Naive thymus-derived CD4-positive, alpha-beta T cell (primary cell): ENCODE measurements at regions of chr9 and their contacts with region 1.

Region 1: DNA sequence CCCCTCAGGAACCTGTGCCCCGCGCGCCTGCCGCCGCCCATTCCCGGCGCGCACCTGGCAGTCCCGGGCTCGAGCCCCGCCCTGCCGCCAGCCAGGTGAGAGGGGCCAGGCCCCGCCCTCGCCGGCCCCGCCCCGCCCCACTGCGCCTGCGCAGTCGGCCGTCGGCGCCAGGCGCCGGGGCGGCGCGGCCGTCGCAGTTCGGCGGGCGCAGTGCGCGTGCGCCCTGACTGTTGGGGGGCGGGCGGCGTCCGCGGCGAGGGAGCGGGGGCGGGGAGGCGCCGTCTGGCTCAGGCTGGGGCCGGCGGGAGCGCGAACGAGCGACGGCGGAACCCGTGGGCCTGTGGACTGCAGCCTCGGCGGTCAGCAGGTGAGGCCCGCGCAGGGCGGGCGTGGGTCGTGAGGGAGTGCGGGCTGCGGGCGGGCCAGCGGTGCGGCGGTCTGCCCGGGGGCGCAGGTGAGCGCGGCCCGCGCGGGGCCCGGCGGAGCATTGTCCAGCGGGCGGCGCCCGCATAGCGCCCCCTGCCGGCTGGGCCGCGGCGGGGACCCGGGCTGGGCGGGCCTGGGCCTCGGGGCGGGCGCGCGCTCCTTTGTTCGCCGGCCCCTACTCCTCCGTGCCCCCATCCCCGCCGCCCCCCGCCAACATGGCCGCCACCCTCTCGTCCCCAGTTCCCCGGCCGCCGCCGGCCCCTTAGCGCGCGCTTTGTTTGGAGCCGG is at the start of gene SPIN1:
- DNase-seq: peak; percentile 66 to 94 (median 87)
- ATAC-seq: peak; percentile 87
- H3K4me3 ChIP-seq: peak within 1 kb of the TSS; percentile 97
- H3K4me3 Mint-ChIP-seq: peak within 1 kb of the TSS; percentile 91 to 98 (median 95)
- H3K27ac ChIP-seq: peak within 1 kb of the TSS; percentile 67
- H3K27ac Mint-ChIP-seq: peak within 1 kb of the TSS; percentile 90 to 97 (median 95)
- H3K4me1 ChIP-seq: peaks cover 8 to 11% of the 10 kb centered on the region in 2 donors
- H3K4me1 Mint-ChIP-seq: peaks cover 23 to 49% (median 43%) of the 10 kb centered on the region in 7 donors
- H3K27me3 ChIP-seq: no peaks in the 10 kb centered on the region
- H3K27me3 Mint-ChIP-seq: no peaks in the 10 kb centered on the region
- total RNA-seq, gene SPIN1: 27.5 to 38.4 (median 34.9) TPM

Region 2: DNA sequence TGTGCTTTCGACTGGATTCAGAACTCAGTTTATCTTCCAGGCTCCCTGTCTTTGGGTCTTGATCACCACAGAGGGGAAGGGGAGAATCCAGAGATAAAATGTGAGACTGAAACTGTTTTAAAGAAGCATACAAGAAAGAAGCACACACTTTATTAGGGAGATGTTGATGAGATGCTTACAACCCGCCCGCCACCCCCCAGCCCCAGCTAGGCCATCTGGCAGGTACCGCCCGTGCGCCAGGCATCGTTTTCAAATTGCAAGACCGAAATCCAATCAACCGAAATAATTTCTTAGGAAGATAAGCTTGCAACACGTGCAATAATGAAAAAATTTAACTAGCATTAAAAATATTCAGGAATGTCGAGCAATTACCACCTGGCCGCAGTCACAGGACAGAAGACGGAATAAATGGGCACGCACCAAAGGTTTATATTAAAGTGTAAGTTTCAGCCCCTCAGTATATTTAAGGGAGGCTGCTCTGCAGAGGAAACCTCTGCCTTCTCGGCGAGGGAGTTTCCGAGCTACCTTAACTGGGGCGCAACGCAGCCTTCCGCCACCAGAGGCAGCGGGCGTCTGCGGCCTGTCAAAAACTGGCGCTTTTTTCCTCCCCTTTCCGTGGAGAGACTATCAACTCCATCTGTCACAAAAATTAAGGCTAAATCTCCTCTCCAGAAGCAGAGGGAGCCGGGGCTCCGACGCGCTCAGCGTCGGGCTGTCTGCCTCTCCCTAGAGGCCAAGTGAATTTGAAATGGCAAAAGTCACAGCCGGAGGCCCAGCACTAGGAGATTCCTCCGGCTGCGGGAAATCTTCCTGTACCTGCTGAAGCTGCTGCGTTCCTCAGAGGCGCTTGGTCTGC is 1440.0 kb before region 1 on chr9:
- CTCF ChIA-PET with region 1: no interaction called
- POLR2A ChIA-PET with region 1: no interaction called
- intact Hi-C with region 1: loop called in 1 of 2 experiments (anchors 5 kb)
- DNase-seq: peak; percentile 50 to 70 (median 66)
- ATAC-seq: peak; percentile 80
- H3K4me3 ChIP-seq: peak overlapping the region; percentile 47
- H3K4me3 Mint-ChIP-seq: peak overlapping the region; percentile 80 to 95 (median 90)
- H3K27ac ChIP-seq: no peak overlapping the region
- H3K27ac Mint-ChIP-seq: peak overlapping the region in 5 of 9 donors; percentile 13 to 75 (median 52)
- H3K4me1 ChIP-seq: peaks cover 5 to 13% of the 10 kb centered on the region in 2 donors
- H3K4me1 Mint-ChIP-seq: peaks cover 7 to 26% (median 15%) of the 10 kb centered on the region in 7 donors
- H3K27me3 ChIP-seq: peaks cover 6 to 16% of the 10 kb centered on the region in 2 donors
- H3K27me3 Mint-ChIP-seq: peaks cover 12 to 35% (median 19%) of the 10 kb centered on the region in 5 donors

Region 3: DNA sequence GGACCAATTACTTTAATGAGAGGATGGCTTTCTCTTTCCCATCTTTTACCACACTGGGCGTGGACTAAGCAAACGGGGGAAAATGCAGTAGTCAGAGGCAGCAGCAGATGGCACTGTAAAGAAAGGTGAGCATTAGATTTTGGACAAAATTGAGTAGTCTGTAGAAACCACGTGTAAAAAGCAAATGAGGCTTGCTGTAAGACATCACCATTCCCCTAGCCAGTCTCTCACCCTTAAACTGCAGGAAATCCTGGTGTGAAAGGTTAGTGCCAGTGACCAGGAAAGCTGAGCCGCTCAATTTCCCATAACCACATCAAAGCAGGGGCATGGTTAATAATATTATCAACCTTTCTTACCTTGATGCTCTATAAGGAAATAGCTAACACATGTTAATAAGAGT is 281.8 kb before region 1 on chr9:
- CTCF ChIA-PET with region 1: no interaction called
- POLR2A ChIA-PET with region 1: no interaction called
- intact Hi-C with region 1: loop called in 1 of 2 experiments (anchors 2 kb)
- DNase-seq: peak in 1 of 9 donors; percentile 3
- ATAC-seq: no peak
- H3K4me3 ChIP-seq: no peak overlapping the region
- H3K4me3 Mint-ChIP-seq: no peak overlapping the region
- H3K27ac ChIP-seq: no peak overlapping the region
- H3K27ac Mint-ChIP-seq: no peak overlapping the region
- H3K4me1 ChIP-seq: no peaks in the 10 kb centered on the region
- H3K4me1 Mint-ChIP-seq: peaks cover 0 to 10% (median 0%) of the 10 kb centered on the region in 7 donors
- H3K27me3 ChIP-seq: peaks cover 0 to 3% of the 10 kb centered on the region in 2 donors
- H3K27me3 Mint-ChIP-seq: peaks cover 21 to 52% (median 34%) of the 10 kb centered on the region in 5 donors

Region 4: DNA sequence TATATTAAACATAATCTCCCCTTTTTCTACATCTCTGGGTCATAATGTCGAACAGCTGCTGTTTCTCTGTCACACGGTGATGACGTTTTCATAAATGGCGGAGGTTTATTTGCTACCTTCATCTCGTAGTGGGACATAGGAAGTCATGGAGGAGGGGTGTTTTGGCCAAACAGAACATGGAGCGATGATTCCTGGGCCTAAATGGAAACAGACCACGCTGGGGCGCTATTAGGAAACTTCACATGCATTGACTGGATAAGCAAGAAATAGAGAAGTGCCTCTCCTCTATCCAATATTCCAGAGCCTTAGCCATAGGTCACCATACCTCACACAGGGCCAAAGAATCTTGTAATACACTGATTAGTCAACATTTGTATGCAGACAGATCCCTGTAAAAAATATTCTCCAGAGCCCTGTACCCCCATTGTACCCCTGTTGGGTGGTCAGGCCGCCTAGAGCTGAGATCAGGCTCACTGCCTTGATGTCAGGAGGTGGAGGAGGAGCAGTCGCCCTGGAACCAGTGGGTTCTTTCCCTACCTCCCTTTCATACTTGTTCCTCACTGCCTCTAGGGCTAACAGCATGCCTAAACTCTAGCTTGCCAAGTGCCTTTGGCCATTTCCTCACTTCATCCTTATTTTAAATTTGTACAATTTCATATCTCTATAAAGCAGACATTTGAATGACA is 77.9 kb before region 1 on chr9:
- CTCF ChIA-PET with region 1: no interaction called
- POLR2A ChIA-PET with region 1: no interaction called
- intact Hi-C with region 1: loop called in 1 of 2 experiments (anchors 2 kb)
- DNase-seq: no peak
- ATAC-seq: peak; percentile 29
- H3K4me3 ChIP-seq: no peak overlapping the region
- H3K4me3 Mint-ChIP-seq: no peak overlapping the region
- H3K27ac ChIP-seq: no peak overlapping the region
- H3K27ac Mint-ChIP-seq: peak overlapping the region in 1 of 9 donors; percentile 15
- H3K4me1 ChIP-seq: peaks cover 3 to 17% of the 10 kb centered on the region in 2 donors
- H3K4me1 Mint-ChIP-seq: peaks cover 13 to 57% (median 23%) of the 10 kb centered on the region in 7 donors
- H3K27me3 ChIP-seq: no peaks in the 10 kb centered on the region
- H3K27me3 Mint-ChIP-seq: no peaks in the 10 kb centered on the region

Region 5: GRCh38 chr9:88433583-88434255 is 45.4 kb after region 1 on chr9:
- CTCF ChIA-PET with region 1: no interaction called
- POLR2A ChIA-PET with region 1: no interaction called
- intact Hi-C with region 1: loop called in 1 of 2 experiments (anchors 5 kb)
- DNase-seq: no peak
- ATAC-seq: no peak
- H3K4me3 ChIP-seq: no peak overlapping the region
- H3K4me3 Mint-ChIP-seq: peak overlapping the region in 1 of 10 donors; percentile 72
- H3K27ac ChIP-seq: no peak overlapping the region
- H3K27ac Mint-ChIP-seq: peak overlapping the region in 5 of 9 donors; percentile 34 to 91 (median 45)
- H3K4me1 ChIP-seq: no peaks in the 10 kb centered on the region
- H3K4me1 Mint-ChIP-seq: peaks cover 13 to 52% (median 18%) of the 10 kb centered on the region in 7 donors
- H3K27me3 ChIP-seq: no peaks in the 10 kb centered on the region
- H3K27me3 Mint-ChIP-seq: no peaks in the 10 kb centered on the region